ENCODE measurements at regions of chr2 and their contacts with region 1.

Region 1: GRCh38 chr2:43158259-43158880 is 68.0 kb downstream of the ZFP36L2 start:
- DNase-seq: peak; percentile 46 to 56
- H3K4me3 ChIP-seq: no peak overlapping the region
- H3K27ac ChIP-seq: peak overlapping the region; percentile 82 to 93 (median 87)
- H3K4me1 ChIP-seq: peaks cover 23 to 43% of the 10 kb centered on the region in 2 donors
- H3K27me3 ChIP-seq: no peaks in the 10 kb centered on the region
- CTCF ChIP-seq: no peak
- POLR2A ChIP-seq: no peak

Region 2: GRCh38 chr2:43131024-43131889 is 27.1 kb before region 1 on chr2:
- intact Hi-C with region 1: no loop called
- DNase-seq: peak; percentile 60 to 67
- H3K4me3 ChIP-seq: no peak overlapping the region
- H3K27ac ChIP-seq: peak overlapping the region; percentile 30 to 56 (median 50)
- H3K4me1 ChIP-seq: peaks cover 0 to 55% of the 10 kb centered on the region in 2 donors
- H3K27me3 ChIP-seq: no peaks in the 10 kb centered on the region
- CTCF ChIP-seq: peak in 4 of 6 experiments; percentile 36 to 61 (median 46)
- POLR2A ChIP-seq: no peak

Region 3: DNA sequence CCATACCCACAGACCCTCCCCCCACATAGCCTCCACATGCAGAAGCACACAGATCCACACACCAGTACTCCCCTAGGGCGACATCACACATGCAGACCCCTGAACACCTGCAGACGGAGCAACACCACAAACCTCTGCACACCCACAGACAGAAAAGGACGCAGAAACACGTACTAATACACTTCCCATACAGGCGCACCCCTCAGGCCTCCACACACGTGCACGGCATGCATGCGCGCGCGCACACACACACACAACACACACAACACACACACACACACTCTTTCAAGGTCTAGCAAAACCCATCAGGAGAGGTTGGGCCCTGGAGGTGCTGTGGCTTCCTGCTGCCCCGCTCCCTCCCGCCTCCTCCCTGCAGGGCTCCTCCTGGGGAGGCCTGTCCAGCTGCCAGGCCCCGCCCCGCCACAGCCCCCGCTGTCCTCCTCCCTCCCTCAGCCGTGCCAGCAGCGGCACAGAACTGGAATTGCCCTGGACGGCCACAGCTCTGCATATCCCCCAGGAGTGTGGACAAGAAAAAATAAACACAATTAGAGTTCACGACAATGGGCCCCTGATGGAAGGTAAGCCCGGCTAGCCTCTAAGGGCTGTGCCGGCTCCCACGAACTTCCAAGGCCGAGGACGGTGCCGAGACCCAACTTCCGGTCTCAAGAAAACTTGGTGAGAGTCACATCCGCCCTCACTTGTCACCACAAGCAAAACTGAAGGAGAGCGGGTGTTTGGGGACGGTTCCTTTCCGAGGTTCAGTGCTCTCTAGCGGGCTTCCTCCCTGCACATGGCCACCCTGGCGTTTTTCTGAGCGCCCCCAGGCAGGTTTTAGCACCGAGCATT is 61.2 kb after region 1 on chr2:
- intact Hi-C with region 1: loop called (anchors 2 kb)
- DNase-seq: peak; percentile 92 to 94
- H3K4me3 ChIP-seq: peak overlapping the region in 1 of 3 donors; percentile 99
- H3K27ac ChIP-seq: peak overlapping the region; percentile 99 to 100 (median 100)
- H3K4me1 ChIP-seq: peaks cover 30 to 41% of the 10 kb centered on the region in 2 donors
- H3K27me3 ChIP-seq: no peaks in the 10 kb centered on the region
- CTCF ChIP-seq: no peak
- POLR2A ChIP-seq: peak in 1 of 2 donors; percentile 64

Region 4: GRCh38 chr2:43239981-43240761 is 81.8 kb after region 1 on chr2:
- intact Hi-C with region 1: no loop called
- DNase-seq: no peak
- H3K4me3 ChIP-seq: no peak overlapping the region
- H3K27ac ChIP-seq: peak overlapping the region; percentile 33 to 71 (median 38)
- H3K4me1 ChIP-seq: peaks cover 26 to 42% of the 10 kb centered on the region in 2 donors
- H3K27me3 ChIP-seq: no peaks in the 10 kb centered on the region
- CTCF ChIP-seq: peak in 1 of 6 experiments; percentile 4
- POLR2A ChIP-seq: no peak

Region 5: DNA sequence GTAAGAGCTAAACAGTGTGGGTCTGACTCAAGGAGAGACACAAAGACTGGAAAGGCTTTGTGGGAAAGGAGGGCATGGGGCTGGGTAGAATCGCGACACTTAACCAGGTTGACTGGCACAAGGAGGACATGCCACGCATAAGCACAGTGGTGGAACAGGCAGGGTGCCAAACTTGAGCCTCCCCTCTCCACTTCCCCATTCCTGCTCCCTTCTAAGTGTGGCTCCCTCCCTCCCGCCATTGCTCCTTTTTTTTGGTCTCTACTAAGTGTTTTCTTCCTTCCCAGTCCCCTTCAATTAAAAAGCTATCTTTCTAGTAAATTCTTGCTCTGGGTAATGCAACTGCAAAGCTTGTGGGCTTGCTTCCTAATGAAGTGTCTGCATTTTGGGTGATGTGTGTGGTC is 108.3 kb after region 1 on chr2:
- intact Hi-C with region 1: no loop called
- DNase-seq: peak; percentile 93 to 95
- H3K4me3 ChIP-seq: no peak overlapping the region
- H3K27ac ChIP-seq: peak overlapping the region; percentile 92 to 95 (median 93)
- H3K4me1 ChIP-seq: peaks cover 64 to 73% of the 10 kb centered on the region in 2 donors
- H3K27me3 ChIP-seq: no peaks in the 10 kb centered on the region
- CTCF ChIP-seq: no peak
- POLR2A ChIP-seq: peak in 1 of 2 donors; percentile 53

Region 6: GRCh38 chr2:43676322-43677050 is 518.1 kb after region 1 on chr2 and contains the start of gene C1GALT1C1L:
- intact Hi-C with region 1: no loop called
- DNase-seq: peak; percentile 63 to 67
- H3K4me3 ChIP-seq: peak within 1 kb of the TSS; percentile 13 to 29 (median 19)
- H3K27ac ChIP-seq: no peak within 1 kb of the TSS
- H3K4me1 ChIP-seq: no peaks in the 10 kb centered on the region
- H3K27me3 ChIP-seq: no peaks in the 10 kb centered on the region
- CTCF ChIP-seq: no peak
- POLR2A ChIP-seq: no peak
- total RNA-seq, gene C1GALT1C1L: 0.68 to 1.8 (median 1.1) TPM in 3 of 4 donors, not detected in the other

Measured in thyroid gland (tissue), 4 donors.